Posterior cingulate gyrus (tissue), 11 donors: ENCODE measurements at regions of chr4 and their contacts with region 1.

Region 1: GRCh38 chr4:142353149-142353738 is 492.9 kb downstream of the INPP4B start:
- DNase-seq: no peak

Region 2: GRCh38 chr4:142728233-142728632 is 375.0 kb after region 1 on chr4:
- intact Hi-C with region 1: loop called (anchors 5 kb)
- DNase-seq: no peak

Region 3: GRCh38 chr4:142840516-142841123 is 487.4 kb after region 1 on chr4:
- intact Hi-C with region 1: loop called (anchors 2 kb)
- DNase-seq: no peak

Region 4: DNA sequence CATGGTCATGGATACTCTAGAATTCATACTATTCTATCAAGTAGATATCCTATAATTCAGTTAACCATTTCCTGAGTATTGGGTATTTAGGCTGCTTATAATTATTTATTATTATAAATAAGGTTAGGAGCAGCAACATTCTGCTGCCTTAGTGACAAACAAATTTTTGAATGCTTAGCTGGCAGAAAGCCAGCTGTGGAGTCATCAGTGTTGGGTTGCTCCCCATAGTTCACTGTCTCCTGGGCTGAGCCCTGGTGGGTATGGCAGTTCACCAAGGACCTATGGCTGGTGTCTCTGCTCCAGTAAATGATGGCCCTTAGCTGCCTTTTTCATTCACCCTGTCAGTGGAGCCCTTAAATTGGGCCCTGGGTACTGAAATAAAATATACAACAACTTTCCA is 1222.1 kb after region 1 on chr4:
- intact Hi-C with region 1: no loop called
- DNase-seq: no peak